H1 (cell line): ENCODE measurements at regions of chr11 and their contacts with region 1.

Region 1: GRCh38 chr11:3609416-3610265 is 32.2 kb downstream of the ART5 start:
- DNase-seq: peak in 1 of 2 experiments; percentile 64
- H3K4me3 ChIP-seq: no peak overlapping the region
- H3K27ac ChIP-seq: no peak overlapping the region
- H3K4me1 ChIP-seq: no peaks in the 10 kb centered on the region
- H3K27me3 ChIP-seq: no peaks in the 10 kb centered on the region
- CTCF ChIP-seq: peak in 2 of 3 experiments; percentile 83 to 86; a peak in 3 of 4 replicates
- EP300 ChIP-seq: no peak
- POLR2A ChIP-seq: no peak
- RAD21 ChIP-seq: peak; percentile 93 to 95

Region 2: DNA sequence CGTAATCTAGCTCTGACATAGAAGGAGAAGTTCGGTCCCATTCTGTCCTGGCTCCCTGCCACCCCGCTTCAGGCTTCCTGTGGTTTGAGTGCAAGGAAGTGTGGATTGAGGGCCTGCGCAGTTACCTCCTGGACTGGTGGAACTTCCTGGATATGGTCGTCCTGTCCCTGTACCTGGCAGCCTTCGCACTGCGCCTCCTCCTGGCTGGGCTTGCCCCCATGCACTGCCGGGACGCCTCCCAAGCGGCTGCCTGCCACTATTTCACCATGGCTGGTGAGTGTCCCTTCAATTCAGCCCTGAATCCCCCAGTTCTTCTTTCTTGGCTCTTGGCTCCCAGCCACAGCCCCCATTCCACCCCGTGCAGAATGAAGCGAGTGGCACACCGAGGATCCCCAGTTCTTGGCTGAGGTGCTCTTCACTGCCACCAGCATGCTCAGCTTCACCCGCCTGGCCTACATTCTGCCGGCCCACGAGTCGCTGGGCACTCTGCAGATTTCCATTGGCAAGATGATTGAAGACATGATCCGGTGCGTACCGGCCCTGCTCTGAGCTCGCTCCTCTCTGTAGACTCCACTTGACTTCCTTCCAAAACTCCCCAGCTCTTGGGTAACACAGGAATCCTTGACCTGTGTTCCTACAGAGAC is 16.8 kb after region 1 on chr11:
- CTCF ChIA-PET with region 1: interaction called, 33 read pairs
- POLR2A ChIA-PET with region 1: no interaction called
- DNase-seq: peak in 1 of 2 experiments; percentile 61
- H3K4me3 ChIP-seq: no peak overlapping the region
- H3K27ac ChIP-seq: no peak overlapping the region
- H3K4me1 ChIP-seq: no peaks in the 10 kb centered on the region
- H3K27me3 ChIP-seq: no peaks in the 10 kb centered on the region
- CTCF ChIP-seq: peak; percentile 23 to 64 (median 49); a peak in 3 of 4 replicates
- EP300 ChIP-seq: no peak
- POLR2A ChIP-seq: no peak
- RAD21 ChIP-seq: peak; percentile 14 to 26; a peak in 1 of 4 replicates

Region 3: DNA sequence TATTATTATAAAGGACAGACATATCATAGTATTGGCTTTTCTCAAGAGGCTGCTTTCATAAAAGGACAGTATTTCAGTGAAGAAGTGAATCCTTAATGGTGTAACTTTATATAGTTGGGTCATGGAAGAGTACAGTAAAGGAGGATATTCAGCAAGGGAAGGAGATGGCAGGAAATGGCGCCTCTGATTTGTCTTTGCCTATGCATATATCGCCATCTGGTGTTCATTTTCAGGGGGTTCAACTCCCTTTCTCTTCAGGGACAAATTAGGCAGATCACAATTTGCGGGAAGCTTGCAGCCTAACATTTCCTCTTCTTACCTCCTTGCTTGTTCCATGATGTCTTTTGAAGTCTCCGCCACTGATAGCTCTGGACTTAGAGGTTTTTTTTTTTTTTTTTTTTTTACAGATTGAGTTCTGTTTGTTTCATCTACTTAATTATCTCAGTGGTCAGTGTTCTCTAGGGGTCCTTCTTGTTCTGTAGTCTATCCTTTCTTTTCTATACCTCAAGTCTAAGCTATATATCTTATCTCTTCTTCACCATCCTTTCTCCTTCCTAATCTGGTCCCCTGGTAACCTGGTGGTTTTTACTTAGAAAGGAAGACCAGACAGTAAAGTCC is 463.1 kb after region 1 on chr11:
- CTCF ChIA-PET with region 1: no interaction called
- POLR2A ChIA-PET with region 1: no interaction called
- DNase-seq: no peak
- H3K4me3 ChIP-seq: no peak overlapping the region
- H3K27ac ChIP-seq: no peak overlapping the region
- H3K4me1 ChIP-seq: no peaks in the 10 kb centered on the region
- H3K27me3 ChIP-seq: no peaks in the 10 kb centered on the region; a peak in 1 of 7 replicates
- CTCF ChIP-seq: peak in 2 of 3 experiments; percentile 89; a peak in 3 of 4 replicates
- EP300 ChIP-seq: no peak
- POLR2A ChIP-seq: no peak
- RAD21 ChIP-seq: peak; percentile 98